ENCODE measurements at regions of chr1 and their contacts with region 1.

Region 1: DNA sequence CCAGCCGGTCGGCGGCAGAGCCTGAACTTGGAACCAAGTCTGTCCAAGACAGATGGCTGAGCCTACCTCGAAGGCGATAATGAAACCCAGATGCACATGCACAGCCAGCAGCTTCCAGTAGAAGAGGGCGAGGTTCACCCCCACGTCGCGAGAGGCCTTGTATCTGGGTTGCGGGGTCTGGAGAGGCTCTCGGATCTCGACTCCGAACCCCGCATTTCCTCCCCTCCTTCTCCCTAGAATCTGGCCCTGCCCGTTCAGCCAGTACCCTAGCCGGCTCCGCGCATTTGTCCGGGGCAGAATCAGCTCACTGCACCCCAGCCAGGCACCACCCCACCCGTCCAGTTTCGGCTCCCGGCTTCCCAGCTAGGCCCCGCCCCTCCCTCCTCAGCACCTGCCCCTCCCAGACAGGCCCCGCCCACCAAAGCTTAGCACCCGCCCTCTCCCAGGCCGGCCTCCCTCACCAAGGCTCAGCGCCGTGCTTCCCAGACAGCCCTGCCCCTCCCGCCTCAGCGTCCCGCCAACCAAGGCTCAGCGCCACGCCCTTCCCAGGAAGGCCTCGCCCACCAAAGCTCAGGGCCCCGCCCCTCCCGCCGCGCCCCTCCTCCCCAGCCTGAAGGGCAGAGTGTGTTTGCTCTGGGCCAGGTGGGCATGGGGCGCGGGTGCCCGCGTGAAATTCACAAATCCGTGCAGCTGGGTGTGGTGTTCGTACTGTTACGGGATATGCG is 4.8 kb upstream of the ARHGEF19 start:
- DNase-seq: peak; percentile 85
- H3K4me3 ChIP-seq: peak overlapping the region; percentile 63
- H3K27ac ChIP-seq: no peak overlapping the region
- H3K27me3 ChIP-seq: peaks cover 10% of the 10 kb centered on the region
- CTCF ChIP-seq: no peak

Region 2: GRCh38 chr1:16206547-16207317 is 10.5 kb before region 1 on chr1:
- CTCF ChIA-PET with region 1: interaction called, 5 read pairs
- POLR2A ChIA-PET with region 1: interaction called, 27 read pairs
- DNase-seq: peak; percentile 97
- H3K4me3 ChIP-seq: peak overlapping the region; percentile 66
- H3K27ac ChIP-seq: peak overlapping the region; percentile 97
- H3K27me3 ChIP-seq: no peaks in the 10 kb centered on the region
- CTCF ChIP-seq: no peak